CD8-positive, alpha-beta T cell (primary cell): ENCODE measurements at regions of chr1 and their contacts with region 1.

Region 1: GRCh38 chr1:28736450-28737306 is at the start of gene YTHDF2:
- DNase-seq: peak; percentile 96 to 99 (median 98)
- ATAC-seq: peak; percentile 92
- H3K4me3 ChIP-seq: peak within 1 kb of the TSS; percentile 89
- H3K4me3 Mint-ChIP-seq: peak within 1 kb of the TSS; percentile 97
- H3K27ac ChIP-seq: peak within 1 kb of the TSS; percentile 84 to 96
- H3K27ac Mint-ChIP-seq: peak within 1 kb of the TSS; percentile 96
- H3K4me1 ChIP-seq: peaks cover 42% of the 10 kb centered on the region
- H3K4me1 Mint-ChIP-seq: peaks cover 32% of the 10 kb centered on the region
- H3K27me3 ChIP-seq: no peaks in the 10 kb centered on the region
- H3K27me3 Mint-ChIP-seq: no peaks in the 10 kb centered on the region
- CTCF ChIP-seq: peak; percentile 80
- total RNA-seq, gene YTHDF2: 95.3 to 101 TPM

Region 2: GRCh38 chr1:27154991-27155781 is 1581.5 kb before region 1 on chr1 and contains the start of gene SLC9A1:
- CTCF ChIA-PET with region 1: interaction called, 4 read pairs
- POLR2A ChIA-PET with region 1: no interaction called
- intact Hi-C with region 1: loop called in 1 of 2 experiments (anchors 5 kb)
- DNase-seq: peak; percentile 88 to 96 (median 91)
- ATAC-seq: peak; percentile 94
- H3K4me3 ChIP-seq: peak within 1 kb of the TSS; percentile 75 to 83
- H3K4me3 Mint-ChIP-seq: peak within 1 kb of the TSS; percentile 81
- H3K27ac ChIP-seq: peak within 1 kb of the TSS; percentile 92 to 100
- H3K27ac Mint-ChIP-seq: peak within 1 kb of the TSS; percentile 99
- H3K4me1 ChIP-seq: peaks cover 40% of the 10 kb centered on the region
- H3K4me1 Mint-ChIP-seq: peaks cover 45% of the 10 kb centered on the region
- H3K27me3 ChIP-seq: no peaks in the 10 kb centered on the region
- H3K27me3 Mint-ChIP-seq: no peaks in the 10 kb centered on the region
- CTCF ChIP-seq: peak; percentile 82
- total RNA-seq, gene SLC9A1: 17.9 to 18.3 TPM

Region 3: GRCh38 chr1:28088168-28088961 is 648.3 kb before region 1 on chr1 and contains the start of gene EYA3:
- CTCF ChIA-PET with region 1: no interaction called
- POLR2A ChIA-PET with region 1: no interaction called
- intact Hi-C with region 1: loop called in 1 of 2 experiments (anchors 2 kb)
- DNase-seq: peak; percentile 97 to 100 (median 99)
- ATAC-seq: peak; percentile 95
- H3K4me3 ChIP-seq: peak within 1 kb of the TSS; percentile 72 to 84
- H3K4me3 Mint-ChIP-seq: peak within 1 kb of the TSS; percentile 85
- H3K27ac ChIP-seq: peak within 1 kb of the TSS; percentile 58 to 89
- H3K27ac Mint-ChIP-seq: peak within 1 kb of the TSS; percentile 97
- H3K4me1 ChIP-seq: peaks cover 25% of the 10 kb centered on the region
- H3K4me1 Mint-ChIP-seq: peaks cover 45% of the 10 kb centered on the region
- H3K27me3 ChIP-seq: no peaks in the 10 kb centered on the region
- H3K27me3 Mint-ChIP-seq: peaks cover 3% of the 10 kb centered on the region
- CTCF ChIP-seq: no peak
- total RNA-seq, gene EYA3: 4.9 to 5.2 TPM

Region 4: GRCh38 chr1:28329395-28330153 is 407.1 kb before region 1 on chr1:
- CTCF ChIA-PET with region 1: no interaction called
- POLR2A ChIA-PET with region 1: interaction called, 4 read pairs
- intact Hi-C with region 1: loop called (anchors 2 kb)
- DNase-seq: peak in 6 of 9 experiments; percentile 18 to 72 (median 46)
- ATAC-seq: peak; percentile 20
- H3K4me3 ChIP-seq: peak overlapping the region; percentile 53 to 57
- H3K4me3 Mint-ChIP-seq: peak overlapping the region; percentile 95
- H3K27ac ChIP-seq: peak overlapping the region; percentile 84 to 86
- H3K27ac Mint-ChIP-seq: peak overlapping the region; percentile 98
- H3K4me1 ChIP-seq: peaks cover 20% of the 10 kb centered on the region
- H3K4me1 Mint-ChIP-seq: peaks cover 34% of the 10 kb centered on the region
- H3K27me3 ChIP-seq: no peaks in the 10 kb centered on the region
- H3K27me3 Mint-ChIP-seq: no peaks in the 10 kb centered on the region
- CTCF ChIP-seq: no peak

Region 5: GRCh38 chr1:28581536-28582247 is 155.0 kb before region 1 on chr1:
- CTCF ChIA-PET with region 1: interaction called, 4 read pairs
- POLR2A ChIA-PET with region 1: interaction called, 29 read pairs
- intact Hi-C with region 1: loop called (anchors 1 kb)
- DNase-seq: peak; percentile 87 to 96 (median 91)
- ATAC-seq: peak; percentile 82
- H3K4me3 ChIP-seq: peak overlapping the region; percentile 88 to 91
- H3K4me3 Mint-ChIP-seq: peak overlapping the region; percentile 99
- H3K27ac ChIP-seq: peak overlapping the region; percentile 83 to 88
- H3K27ac Mint-ChIP-seq: peak overlapping the region; percentile 97
- H3K4me1 ChIP-seq: peaks cover 24% of the 10 kb centered on the region
- H3K4me1 Mint-ChIP-seq: peaks cover 37% of the 10 kb centered on the region
- H3K27me3 ChIP-seq: no peaks in the 10 kb centered on the region
- H3K27me3 Mint-ChIP-seq: no peaks in the 10 kb centered on the region
- CTCF ChIP-seq: no peak

Region 6: GRCh38 chr1:28668191-28668955 is 68.3 kb before region 1 on chr1 and contains the start of gene GMEB1:
- CTCF ChIA-PET with region 1: interaction called, 7 read pairs
- POLR2A ChIA-PET with region 1: interaction called, 26 read pairs
- intact Hi-C with region 1: loop called (anchors 1 kb)
- DNase-seq: peak; percentile 66 to 91 (median 82)
- ATAC-seq: peak; percentile 61
- H3K4me3 ChIP-seq: peak within 1 kb of the TSS; percentile 83 to 98
- H3K4me3 Mint-ChIP-seq: peak within 1 kb of the TSS; percentile 92
- H3K27ac ChIP-seq: peak within 1 kb of the TSS; percentile 81 to 98
- H3K27ac Mint-ChIP-seq: peak within 1 kb of the TSS; percentile 97
- H3K4me1 ChIP-seq: peaks cover 9% of the 10 kb centered on the region
- H3K4me1 Mint-ChIP-seq: peaks cover 22% of the 10 kb centered on the region
- H3K27me3 ChIP-seq: no peaks in the 10 kb centered on the region
- H3K27me3 Mint-ChIP-seq: no peaks in the 10 kb centered on the region
- CTCF ChIP-seq: no peak
- total RNA-seq, gene GMEB1: 12.9 to 13.6 TPM

Region 7: GRCh38 chr1:28914228-28915030 is 177.8 kb after region 1 on chr1 and contains the start of gene EPB41:
- CTCF ChIA-PET with region 1: no interaction called
- POLR2A ChIA-PET with region 1: no interaction called
- intact Hi-C with region 1: loop called in 1 of 2 experiments (anchors 1 kb)
- DNase-seq: peak; percentile 76 to 96 (median 94)
- ATAC-seq: peak; percentile 77
- H3K4me3 ChIP-seq: peak within 1 kb of the TSS; percentile 80 to 86
- H3K4me3 Mint-ChIP-seq: peak within 1 kb of the TSS; percentile 99
- H3K27ac ChIP-seq: peak within 1 kb of the TSS; percentile 62 to 77
- H3K27ac Mint-ChIP-seq: peak within 1 kb of the TSS; percentile 98
- H3K4me1 ChIP-seq: peaks cover 40% of the 10 kb centered on the region
- H3K4me1 Mint-ChIP-seq: peaks cover 49% of the 10 kb centered on the region
- H3K27me3 ChIP-seq: no peaks in the 10 kb centered on the region
- H3K27me3 Mint-ChIP-seq: no peaks in the 10 kb centered on the region
- CTCF ChIP-seq: no peak
- total RNA-seq, gene EPB41: 109 to 117 TPM